ENCODE measurements at regions of chr18 and their contacts with region 1.

Region 1: DNA sequence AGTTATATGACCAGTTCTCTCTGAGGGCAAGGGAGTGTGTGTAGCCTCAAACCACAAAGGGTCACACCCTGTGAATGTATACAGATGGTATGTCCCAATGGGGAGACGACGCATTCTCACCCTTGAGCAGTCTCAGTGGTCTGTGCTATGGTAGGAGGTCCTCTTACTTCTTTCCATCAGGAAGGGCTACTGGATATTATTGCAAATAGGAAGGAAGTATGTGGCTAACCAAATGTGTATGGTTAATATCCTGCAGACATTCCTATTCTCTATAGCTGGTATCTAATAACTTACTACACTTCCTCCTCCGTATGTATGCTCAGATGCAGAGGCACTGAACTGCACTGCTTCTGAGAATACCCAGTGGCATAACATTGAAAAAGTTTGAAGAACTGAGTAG is 306.7 kb upstream of the CCDC68 start:
- DNase-seq: peak; percentile 58
- ATAC-seq: peak; percentile 31
- H3K4me3 ChIP-seq: peak overlapping the region in 2 of 5 experiments; percentile 8 to 26
- H3K4me3 Mint-ChIP-seq: peak overlapping the region; percentile 69
- H3K27ac ChIP-seq: peak overlapping the region; percentile 84 to 94
- H3K27ac Mint-ChIP-seq: peak overlapping the region; percentile 91
- H3K4me1 ChIP-seq: peaks cover 59 to 63% of the 10 kb centered on the region in 2 donors
- H3K4me1 Mint-ChIP-seq: peaks cover 69% of the 10 kb centered on the region
- H3K27me3 ChIP-seq: no peaks in the 10 kb centered on the region
- H3K27me3 Mint-ChIP-seq: no peaks in the 10 kb centered on the region
- CTCF ChIP-seq: no peak

Region 2: DNA sequence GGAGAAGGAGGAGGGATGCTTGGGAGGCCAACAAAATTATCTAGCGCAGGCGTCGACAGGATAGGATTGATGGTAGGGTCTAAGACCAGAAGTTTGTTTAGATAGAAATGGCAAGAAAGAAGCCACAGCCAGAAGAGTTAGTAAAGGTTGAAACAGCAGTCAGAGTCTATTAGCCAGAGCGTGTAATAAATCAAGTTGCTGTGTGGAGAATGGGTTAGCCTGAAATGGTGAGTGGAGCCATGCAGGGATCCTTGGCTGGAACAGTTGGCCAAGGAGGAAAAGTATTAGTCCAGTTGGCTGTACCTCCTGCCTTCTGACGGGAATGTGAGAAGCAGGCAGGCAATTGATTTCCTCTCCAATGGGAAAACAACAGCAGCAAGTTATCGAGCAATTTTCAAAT is 116.0 kb before region 1 on chr18:
- CTCF ChIA-PET with region 1: no interaction called
- POLR2A ChIA-PET with region 1: no interaction called
- intact Hi-C with region 1: no loop called
- DNase-seq: no peak
- ATAC-seq: no peak
- H3K4me3 ChIP-seq: no peak overlapping the region
- H3K4me3 Mint-ChIP-seq: no peak overlapping the region
- H3K27ac ChIP-seq: no peak overlapping the region
- H3K27ac Mint-ChIP-seq: no peak overlapping the region
- H3K4me1 ChIP-seq: no peaks in the 10 kb centered on the region
- H3K4me1 Mint-ChIP-seq: no peaks in the 10 kb centered on the region
- H3K27me3 ChIP-seq: no peaks in the 10 kb centered on the region
- H3K27me3 Mint-ChIP-seq: peaks cover 14% of the 10 kb centered on the region
- CTCF ChIP-seq: no peak

Region 3: DNA sequence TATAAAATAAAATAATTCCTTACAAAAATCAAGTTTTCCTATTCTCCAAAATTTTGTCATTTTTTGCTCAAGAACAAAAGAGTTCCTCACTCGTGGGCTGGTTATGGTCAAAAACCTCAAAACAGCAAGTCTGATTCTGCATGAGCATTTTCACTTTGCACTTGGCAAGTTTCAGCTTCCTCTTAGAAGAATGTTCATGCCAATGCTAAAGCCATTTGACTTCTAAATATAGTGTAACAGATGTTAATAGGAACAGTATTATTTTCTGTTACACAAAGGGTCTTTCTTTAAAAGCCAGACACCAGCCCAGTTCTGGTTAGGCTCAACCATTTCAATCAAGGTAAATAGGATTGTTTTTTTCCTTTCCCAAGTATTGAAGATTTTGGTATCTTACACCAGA is 45.5 kb before region 1 on chr18:
- CTCF ChIA-PET with region 1: no interaction called
- POLR2A ChIA-PET with region 1: no interaction called
- intact Hi-C with region 1: no loop called
- DNase-seq: peak; percentile 30
- ATAC-seq: peak; percentile 36
- H3K4me3 ChIP-seq: peak overlapping the region in 1 of 5 experiments; percentile 26
- H3K4me3 Mint-ChIP-seq: no peak overlapping the region
- H3K27ac ChIP-seq: peak overlapping the region; percentile 13 to 60
- H3K27ac Mint-ChIP-seq: peak overlapping the region; percentile 17
- H3K4me1 ChIP-seq: peaks cover 29 to 30% of the 10 kb centered on the region in 2 donors
- H3K4me1 Mint-ChIP-seq: peaks cover 31% of the 10 kb centered on the region
- H3K27me3 ChIP-seq: peaks cover 0 to 4% (median 0%) of the 10 kb centered on the region in 4 experiments
- H3K27me3 Mint-ChIP-seq: no peaks in the 10 kb centered on the region
- CTCF ChIP-seq: no peak

Region 4: GRCh38 chr18:55251254-55251971 is 14.6 kb before region 1 on chr18:
- CTCF ChIA-PET with region 1: interaction called, 5 read pairs
- POLR2A ChIA-PET with region 1: interaction called, 6 read pairs
- intact Hi-C with region 1: loop called (anchors 1 kb)
- DNase-seq: no peak
- ATAC-seq: no peak
- H3K4me3 ChIP-seq: no peak overlapping the region
- H3K4me3 Mint-ChIP-seq: peak overlapping the region; percentile 52
- H3K27ac ChIP-seq: peak overlapping the region in 1 of 2 donors; percentile 31
- H3K27ac Mint-ChIP-seq: peak overlapping the region; percentile 59
- H3K4me1 ChIP-seq: peaks cover 45 to 52% of the 10 kb centered on the region in 2 donors
- H3K4me1 Mint-ChIP-seq: peaks cover 63% of the 10 kb centered on the region
- H3K27me3 ChIP-seq: no peaks in the 10 kb centered on the region
- H3K27me3 Mint-ChIP-seq: no peaks in the 10 kb centered on the region
- CTCF ChIP-seq: no peak

Region 5: GRCh38 chr18:55283309-55283708 is 17.3 kb after region 1 on chr18:
- CTCF ChIA-PET with region 1: interaction called, 5 read pairs
- POLR2A ChIA-PET with region 1: no interaction called
- intact Hi-C with region 1: loop called (anchors 2 kb)
- DNase-seq: no peak
- ATAC-seq: no peak
- H3K4me3 ChIP-seq: no peak overlapping the region
- H3K4me3 Mint-ChIP-seq: no peak overlapping the region
- H3K27ac ChIP-seq: peak overlapping the region in 1 of 2 donors; percentile 15
- H3K27ac Mint-ChIP-seq: no peak overlapping the region
- H3K4me1 ChIP-seq: peaks cover 5 to 26% of the 10 kb centered on the region in 2 donors
- H3K4me1 Mint-ChIP-seq: peaks cover 74% of the 10 kb centered on the region
- H3K27me3 ChIP-seq: no peaks in the 10 kb centered on the region
- H3K27me3 Mint-ChIP-seq: no peaks in the 10 kb centered on the region
- CTCF ChIP-seq: no peak

Region 6: DNA sequence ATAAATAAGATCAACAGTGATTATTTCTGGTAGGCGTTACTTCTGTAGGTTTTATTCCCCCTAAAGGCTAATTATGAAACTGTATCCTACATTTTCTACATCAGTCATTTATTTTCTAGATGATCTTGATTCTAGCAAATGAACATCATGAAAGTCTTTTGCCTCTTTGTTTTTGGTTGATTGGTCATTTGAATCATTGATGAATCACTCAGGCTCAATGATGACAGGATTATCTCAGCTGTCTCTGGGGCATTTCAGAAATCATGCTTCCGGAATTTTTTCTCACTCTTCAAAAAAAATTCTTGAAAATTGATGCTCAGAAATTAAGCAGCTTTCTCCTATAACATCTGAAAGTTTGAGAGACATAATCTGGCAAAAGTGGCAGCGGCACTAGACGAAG is 620.9 kb after region 1 on chr18:
- CTCF ChIA-PET with region 1: no interaction called
- POLR2A ChIA-PET with region 1: no interaction called
- intact Hi-C with region 1: no loop called
- DNase-seq: no peak
- ATAC-seq: no peak
- H3K4me3 ChIP-seq: no peak overlapping the region
- H3K4me3 Mint-ChIP-seq: no peak overlapping the region
- H3K27ac ChIP-seq: no peak overlapping the region
- H3K27ac Mint-ChIP-seq: no peak overlapping the region
- H3K4me1 ChIP-seq: no peaks in the 10 kb centered on the region
- H3K4me1 Mint-ChIP-seq: no peaks in the 10 kb centered on the region
- H3K27me3 ChIP-seq: no peaks in the 10 kb centered on the region
- H3K27me3 Mint-ChIP-seq: no peaks in the 10 kb centered on the region
- CTCF ChIP-seq: no peak

Measured in B cell (primary cell).